H1 (cell line): ENCODE measurements at regions of chr21 and their contacts with region 1.

Region 1: GRCh38 chr21:41460578-41461527 is 34.8 kb downstream of the MX1 start:
- DNase-seq: peak in 1 of 2 experiments; percentile 70
- H3K4me3 ChIP-seq: no peak overlapping the region
- H3K27ac ChIP-seq: no peak overlapping the region
- H3K4me1 ChIP-seq: peaks cover 0 to 7% (median 1%) of the 10 kb centered on the region in 4 experiments; a peak in 4 of 7 replicates
- H3K27me3 ChIP-seq: no peaks in the 10 kb centered on the region
- CTCF ChIP-seq: peak; percentile 70 to 88 (median 83)
- EP300 ChIP-seq: no peak
- POLR2A ChIP-seq: no peak
- RAD21 ChIP-seq: peak; percentile 79 to 84

Region 2: DNA sequence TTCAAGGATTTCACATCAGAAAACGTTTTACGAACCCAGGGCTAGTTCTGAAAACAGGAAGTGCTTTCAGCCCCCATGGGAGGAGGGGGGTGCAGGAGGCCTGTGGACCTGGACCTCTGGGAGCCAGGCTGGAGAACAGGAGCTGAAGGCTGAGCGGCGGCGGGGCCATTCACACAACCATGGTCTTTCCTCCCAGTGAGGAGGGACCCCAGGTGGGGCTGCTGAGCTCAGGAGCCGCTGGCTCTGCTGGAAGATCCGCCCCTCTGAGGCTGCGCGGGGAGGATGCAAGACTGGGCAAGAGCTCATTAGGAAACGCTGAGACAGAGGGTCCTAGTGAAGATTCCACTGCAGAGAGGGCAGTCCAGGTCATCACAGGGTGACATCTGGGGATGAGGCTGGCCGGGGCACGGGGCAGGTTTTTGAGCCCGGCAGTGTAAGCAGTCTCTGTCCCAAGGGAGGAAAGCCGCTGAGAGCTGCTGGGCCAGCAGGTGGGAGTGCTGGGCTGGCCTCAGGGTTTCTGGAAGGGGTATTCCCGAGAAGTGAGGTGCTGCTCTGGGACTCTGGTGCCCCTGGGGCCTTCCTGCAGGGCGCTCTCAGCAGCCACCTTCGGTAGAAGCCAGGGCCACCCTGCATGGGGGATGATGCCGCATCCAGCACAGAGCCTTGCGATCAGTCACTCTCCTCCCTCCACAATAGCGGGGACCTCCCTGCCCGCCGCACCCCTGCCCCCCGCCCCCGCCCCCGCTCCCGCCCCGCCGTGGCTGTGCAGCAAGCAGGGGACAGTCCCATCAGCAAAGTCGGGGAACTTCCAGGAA is 91.5 kb before region 1 on chr21:
- CTCF ChIA-PET with region 1: interaction called, 14 read pairs
- POLR2A ChIA-PET with region 1: interaction called, 4 read pairs
- DNase-seq: peak in 1 of 2 experiments; percentile 80
- H3K4me3 ChIP-seq: peak overlapping the region; percentile 24 to 59 (median 44); a peak in 7 of 8 replicates
- H3K27ac ChIP-seq: no peak overlapping the region
- H3K4me1 ChIP-seq: peaks cover 0 to 15% (median 3%) of the 10 kb centered on the region in 4 experiments; a peak in 5 of 7 replicates
- H3K27me3 ChIP-seq: peaks cover 0 to 1% (median 0%) of the 10 kb centered on the region in 4 experiments; a peak in 1 of 7 replicates
- CTCF ChIP-seq: peak; percentile 40 to 50 (median 45)
- EP300 ChIP-seq: no peak
- POLR2A ChIP-seq: no peak
- RAD21 ChIP-seq: peak; percentile 54 to 56